ENCODE measurements at regions of chr20 and their contacts with region 1.

Region 1: DNA sequence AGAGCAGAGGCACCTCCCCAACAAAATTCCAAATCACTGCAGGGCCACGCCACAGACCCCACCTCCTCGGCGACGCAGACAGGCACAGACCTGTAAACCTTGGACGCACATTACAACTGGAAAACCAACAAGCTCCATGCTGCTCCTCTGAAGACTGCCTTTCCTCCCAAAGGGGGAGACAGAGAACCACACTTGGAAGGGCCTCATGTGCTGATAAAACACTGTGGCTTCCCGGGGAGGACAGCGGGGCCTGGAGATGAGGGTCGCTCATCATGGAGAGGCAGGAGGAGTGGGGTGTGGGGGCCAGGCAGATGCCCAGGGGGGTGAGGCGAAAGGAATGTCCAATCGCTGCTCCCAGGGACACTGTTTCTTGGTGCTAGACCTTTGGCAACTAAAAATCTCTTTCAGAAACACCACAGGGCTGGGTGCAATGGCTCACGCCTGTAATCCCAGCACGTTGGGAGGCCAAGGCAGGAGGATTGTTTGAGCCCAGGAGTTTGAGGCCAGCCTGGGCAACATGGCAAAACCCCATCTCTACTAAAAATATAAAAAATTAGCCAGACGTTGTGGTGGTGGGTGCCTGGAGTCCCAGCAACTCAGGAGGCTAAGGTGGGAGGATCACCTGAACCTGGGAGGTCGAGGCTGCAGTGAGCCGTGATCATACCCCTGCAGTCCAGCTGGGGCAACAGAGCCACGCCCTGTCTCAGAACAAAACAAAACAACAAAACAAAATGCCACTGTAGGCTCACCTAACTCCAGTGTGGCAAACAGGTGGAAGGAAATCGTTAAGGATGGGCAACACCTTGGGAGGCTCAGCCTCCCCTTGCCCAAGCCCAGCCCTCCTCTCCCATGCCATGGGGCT is 53.8 kb downstream of the ABHD12 start:
- DNase-seq: no peak
- ATAC-seq: no peak
- H3K4me3 Mint-ChIP-seq: no peak overlapping the region
- H3K27ac Mint-ChIP-seq: no peak overlapping the region
- H3K4me1 Mint-ChIP-seq: peaks cover 3% of the 10 kb centered on the region
- H3K27me3 Mint-ChIP-seq: no peaks in the 10 kb centered on the region

Region 2: GRCh38 chr20:25299806-25300205 is 37.0 kb before region 1 on chr20:
- CTCF ChIA-PET with region 1: interaction called, 4 read pairs
- POLR2A ChIA-PET with region 1: interaction called, 13 read pairs
- intact Hi-C with region 1: no loop called
- DNase-seq: no peak
- ATAC-seq: no peak
- H3K4me3 Mint-ChIP-seq: no peak overlapping the region
- H3K27ac Mint-ChIP-seq: no peak overlapping the region
- H3K4me1 Mint-ChIP-seq: no peaks in the 10 kb centered on the region
- H3K27me3 Mint-ChIP-seq: no peaks in the 10 kb centered on the region